ENCODE measurements at regions of chr1 and their contacts with region 1.

Region 1: DNA sequence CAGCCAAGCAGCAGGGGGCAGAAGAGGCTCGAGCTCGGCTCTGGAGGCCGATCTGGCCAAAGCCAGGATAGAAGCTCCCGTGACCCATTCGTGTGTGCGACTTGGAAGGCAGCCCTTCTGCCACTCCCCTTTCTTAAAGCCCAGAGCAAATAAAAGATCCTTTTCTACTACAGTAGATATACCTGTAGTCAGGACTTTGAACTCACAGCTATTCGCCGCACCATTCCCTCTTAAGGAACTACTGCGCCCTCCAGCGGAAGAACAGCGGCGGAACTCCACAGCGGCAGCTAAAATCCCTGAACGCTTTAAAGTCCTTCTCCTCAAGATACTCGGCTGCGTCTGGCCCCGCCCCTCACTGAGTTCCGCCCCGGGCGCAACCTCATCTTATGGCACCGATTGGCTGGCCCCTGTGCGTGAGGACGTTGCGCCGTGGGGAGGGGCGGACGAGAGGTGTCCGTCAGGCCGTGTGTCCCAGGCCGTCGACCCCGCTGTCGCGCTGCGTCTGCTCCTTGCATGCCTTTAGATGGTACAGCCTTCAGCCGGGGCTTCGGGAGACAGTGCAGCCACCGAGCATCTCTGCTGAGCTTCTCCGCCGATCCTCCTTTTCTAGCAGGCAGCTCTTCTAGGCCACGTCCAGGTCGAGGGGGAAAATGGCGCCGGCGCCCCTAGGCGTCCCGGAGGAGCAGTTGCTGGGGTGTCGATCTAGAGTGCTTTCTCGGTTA is at the start of gene LRIG2:
- DNase-seq: peak; percentile 97
- ATAC-seq: peak; percentile 97
- H3K4me3 ChIP-seq: peak within 1 kb of the TSS; percentile 86 to 95
- H3K27ac ChIP-seq: peak within 1 kb of the TSS; percentile 86
- H3K4me1 ChIP-seq: peaks cover 9 to 14% of the 10 kb centered on the region in 2 experiments
- H3K27me3 ChIP-seq: no peaks in the 10 kb centered on the region
- CTCF ChIP-seq: peak; percentile 64 to 99 (median 93)
- POLR2A ChIP-seq: peak; percentile 94
- RAD21 ChIP-seq: peak; percentile 75
- total RNA-seq, gene LRIG2: 13.5 TPM

Region 2: GRCh38 chr1:112715264-112716053 is 357.5 kb before region 1 on chr1 and contains the start of gene PPM1J:
- CTCF ChIA-PET with region 1: interaction called, 31 read pairs
- POLR2A ChIA-PET with region 1: interaction called, 3 read pairs
- RAD21 ChIA-PET with region 1: no interaction called
- intact Hi-C with region 1: loop called (anchors 2 kb)
- DNase-seq: peak; percentile 89
- ATAC-seq: peak; percentile 82
- H3K4me3 ChIP-seq: peak within 1 kb of the TSS; percentile 58 to 75
- H3K27ac ChIP-seq: peak within 1 kb of the TSS; percentile 34; the same call in 1 of the 2 replicates
- H3K4me1 ChIP-seq: peaks cover 18 to 39% of the 10 kb centered on the region in 2 experiments
- H3K27me3 ChIP-seq: no peaks in the 10 kb centered on the region
- CTCF ChIP-seq: no peak
- POLR2A ChIP-seq: no peak
- RAD21 ChIP-seq: no peak
- total RNA-seq, gene PPM1J: 7.5 TPM

Region 3: DNA sequence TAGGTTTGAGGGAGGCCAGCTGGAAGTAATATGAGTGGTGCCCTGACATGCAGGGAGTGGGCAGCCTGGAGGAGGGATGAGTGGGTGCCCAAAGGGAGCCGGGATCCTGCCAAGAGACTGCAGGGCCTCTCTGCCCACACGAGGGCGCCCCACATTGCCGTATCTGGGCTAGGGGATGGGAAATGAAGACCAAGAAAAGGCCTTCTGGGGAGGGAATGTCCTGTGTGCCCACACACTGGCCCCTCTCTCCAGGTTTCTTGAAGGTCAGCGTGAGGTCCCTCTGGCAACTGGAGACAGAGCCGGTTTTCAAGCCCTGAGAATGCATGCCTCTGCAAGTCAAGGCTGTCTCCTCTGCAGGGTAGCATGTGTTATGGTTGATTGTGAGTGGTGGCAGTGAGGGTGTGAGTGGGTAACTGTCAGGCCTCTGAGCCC is 263.6 kb before region 1 on chr1:
- CTCF ChIA-PET with region 1: interaction called, 17 read pairs
- POLR2A ChIA-PET with region 1: no interaction called
- RAD21 ChIA-PET with region 1: no interaction called
- intact Hi-C with region 1: loop called (anchors 10 kb)
- DNase-seq: peak; percentile 40
- ATAC-seq: peak; percentile 96
- H3K4me3 ChIP-seq: no peak overlapping the region
- H3K27ac ChIP-seq: no peak overlapping the region
- H3K4me1 ChIP-seq: peaks cover 0 to 4% of the 10 kb centered on the region in 2 experiments; a peak in 1 of 4 replicates
- H3K27me3 ChIP-seq: no peaks in the 10 kb centered on the region
- CTCF ChIP-seq: peak; percentile 89 to 97 (median 96)
- POLR2A ChIP-seq: no peak
- RAD21 ChIP-seq: peak; percentile 91

Region 4: DNA sequence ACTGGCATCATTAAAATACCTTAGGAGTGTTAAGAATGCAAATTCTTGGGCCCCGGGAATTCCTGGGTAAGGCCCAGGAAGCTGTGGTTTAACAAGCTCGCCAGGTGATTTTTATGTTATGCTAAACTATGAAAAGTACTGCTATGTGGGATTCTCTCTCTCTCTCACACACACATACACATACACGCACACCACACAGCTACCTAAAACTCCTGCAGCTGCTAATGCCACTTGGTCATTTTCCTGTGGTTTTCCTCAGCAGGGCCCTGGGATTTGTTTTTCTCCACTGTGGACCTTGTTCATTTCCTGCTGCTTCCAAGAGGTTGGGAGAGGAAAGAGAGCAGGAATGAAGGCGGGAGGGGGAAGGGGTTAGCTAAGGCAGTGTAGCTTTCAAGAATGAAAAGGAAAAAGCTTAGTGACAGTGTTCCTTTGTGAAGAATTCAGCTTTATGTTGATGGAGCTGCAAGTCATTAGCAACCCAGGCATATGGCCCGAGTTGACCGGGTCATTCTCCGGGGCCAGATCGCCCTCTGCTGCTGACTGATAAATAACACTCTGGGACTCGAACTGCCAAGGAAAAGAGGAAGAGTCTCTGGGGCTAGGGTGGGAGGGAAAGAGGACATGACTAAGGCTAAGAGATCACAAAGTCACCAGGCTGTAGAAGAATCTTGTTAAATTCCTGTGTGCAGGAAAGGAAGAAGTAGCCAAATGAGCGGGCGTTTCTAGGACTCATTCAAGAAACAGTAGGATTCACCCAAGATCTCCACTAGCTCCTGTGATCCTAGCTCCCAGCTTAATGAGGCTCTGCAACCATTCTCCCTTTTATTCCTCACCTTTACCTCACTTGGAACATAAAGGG is 30.4 kb before region 1 on chr1:
- CTCF ChIA-PET with region 1: interaction called, 18 read pairs
- POLR2A ChIA-PET with region 1: interaction called, 6 read pairs
- RAD21 ChIA-PET with region 1: interaction called, 6 to 7 read pairs
- intact Hi-C with region 1: no loop called
- DNase-seq: peak; percentile 36
- ATAC-seq: peak; percentile 97
- H3K4me3 ChIP-seq: no peak overlapping the region
- H3K27ac ChIP-seq: peak overlapping the region; percentile 2; the same call in 1 of the 2 replicates
- H3K4me1 ChIP-seq: peaks cover 9 to 17% of the 10 kb centered on the region in 2 experiments; a peak in 3 of 4 replicates
- H3K27me3 ChIP-seq: no peaks in the 10 kb centered on the region
- CTCF ChIP-seq: peak; percentile 51 to 88 (median 67); a peak in 5 of 6 replicates
- POLR2A ChIP-seq: no peak
- RAD21 ChIP-seq: peak; percentile 94

Region 5: DNA sequence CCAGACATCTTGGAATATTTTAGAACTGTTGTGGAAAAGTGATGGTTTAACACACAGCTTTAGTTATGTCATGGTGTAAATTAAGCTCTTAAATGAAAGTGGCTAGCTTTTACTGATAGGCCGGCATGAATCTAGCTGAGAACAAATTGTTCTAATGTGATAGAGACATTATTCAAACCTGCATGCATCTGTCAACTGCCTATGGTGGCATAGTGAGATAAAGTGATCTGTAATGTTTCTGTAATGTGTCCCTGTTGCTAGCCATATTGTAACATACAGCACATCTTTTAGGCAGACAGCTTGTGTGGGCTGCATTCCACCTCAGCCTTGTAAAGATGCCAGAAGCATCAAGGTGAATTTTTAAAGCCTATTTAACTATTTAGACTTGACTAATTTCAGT is 16.1 kb after region 1 on chr1:
- CTCF ChIA-PET with region 1: interaction called, 12 read pairs
- POLR2A ChIA-PET with region 1: interaction called, 3 read pairs
- RAD21 ChIA-PET with region 1: no interaction called
- intact Hi-C with region 1: no loop called
- DNase-seq: no peak
- ATAC-seq: no peak
- H3K4me3 ChIP-seq: no peak overlapping the region
- H3K27ac ChIP-seq: no peak overlapping the region
- H3K4me1 ChIP-seq: no peaks in the 10 kb centered on the region
- H3K27me3 ChIP-seq: no peaks in the 10 kb centered on the region
- CTCF ChIP-seq: no peak
- POLR2A ChIP-seq: no peak
- RAD21 ChIP-seq: no peak

Region 6: GRCh38 chr1:113677250-113678158 is 604.6 kb after region 1 on chr1:
- CTCF ChIA-PET with region 1: interaction called, 5 read pairs
- POLR2A ChIA-PET with region 1: no interaction called
- RAD21 ChIA-PET with region 1: no interaction called
- intact Hi-C with region 1: loop called (anchors 2 kb)
- DNase-seq: peak; percentile 44
- ATAC-seq: peak; percentile 67
- H3K4me3 ChIP-seq: no peak overlapping the region
- H3K27ac ChIP-seq: no peak overlapping the region
- H3K4me1 ChIP-seq: peaks cover 5 to 10% of the 10 kb centered on the region in 2 experiments; a peak in 3 of 4 replicates
- H3K27me3 ChIP-seq: no peaks in the 10 kb centered on the region
- CTCF ChIP-seq: peak; percentile 42 to 92 (median 66)
- POLR2A ChIP-seq: no peak
- RAD21 ChIP-seq: peak; percentile 89

Measured in HCT116 (cell line).